ENCODE measurements at regions of chr2 and their contacts with region 1.

Region 1: DNA sequence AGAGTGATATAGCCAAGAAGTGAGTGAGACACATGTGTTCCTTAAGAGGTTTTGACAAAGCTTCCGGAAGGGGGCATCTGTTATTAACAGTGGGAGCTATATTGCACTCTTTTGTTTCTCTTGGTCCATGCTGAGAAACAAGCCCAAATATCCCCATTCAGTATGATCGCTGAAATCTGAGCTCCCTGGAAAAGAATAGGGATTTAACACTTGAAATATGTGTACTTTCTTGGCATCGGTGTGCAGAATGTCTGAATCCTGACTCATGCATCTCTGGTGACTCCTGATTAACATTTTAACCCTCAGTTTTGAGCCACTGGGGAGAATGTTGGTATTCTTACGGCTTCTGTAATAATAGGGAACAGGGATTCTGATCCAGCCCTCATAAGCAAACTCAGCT is 448.1 kb downstream of the TSN start:
- DNase-seq: no peak
- H3K4me3 ChIP-seq: no peak overlapping the region
- H3K27ac ChIP-seq: no peak overlapping the region
- H3K4me1 ChIP-seq: no peaks in the 10 kb centered on the region
- H3K27me3 ChIP-seq: no peaks in the 10 kb centered on the region

Region 2: DNA sequence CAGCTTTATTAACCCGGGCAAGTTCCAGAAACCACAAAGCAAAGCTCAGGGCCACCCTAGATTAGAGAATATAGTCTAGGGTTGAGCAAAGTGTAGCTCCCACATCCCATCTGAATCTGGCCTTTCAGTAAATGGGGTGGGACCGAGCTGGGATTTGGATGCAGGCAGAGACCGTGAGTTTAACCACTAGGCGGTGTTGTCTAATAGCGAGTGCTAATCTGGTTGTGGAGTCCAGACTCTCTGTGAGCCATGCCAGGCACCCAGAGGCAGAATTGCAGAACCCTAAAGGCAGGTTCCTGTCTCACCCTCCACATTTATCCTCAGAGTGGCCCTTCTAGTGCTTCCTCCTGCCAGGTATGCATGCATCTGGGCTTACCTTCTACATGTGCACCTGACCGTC is 12.2 kb before region 1 on chr2:
- CTCF ChIA-PET with region 1: interaction called, 12 read pairs
- POLR2A ChIA-PET with region 1: no interaction called
- DNase-seq: peak; percentile 35 to 65 (median 62)
- H3K4me3 ChIP-seq: no peak overlapping the region
- H3K27ac ChIP-seq: no peak overlapping the region
- H3K4me1 ChIP-seq: peaks cover 5 to 29% (median 24%) of the 10 kb centered on the region in 4 experiments
- H3K27me3 ChIP-seq: no peaks in the 10 kb centered on the region

Region 3: DNA sequence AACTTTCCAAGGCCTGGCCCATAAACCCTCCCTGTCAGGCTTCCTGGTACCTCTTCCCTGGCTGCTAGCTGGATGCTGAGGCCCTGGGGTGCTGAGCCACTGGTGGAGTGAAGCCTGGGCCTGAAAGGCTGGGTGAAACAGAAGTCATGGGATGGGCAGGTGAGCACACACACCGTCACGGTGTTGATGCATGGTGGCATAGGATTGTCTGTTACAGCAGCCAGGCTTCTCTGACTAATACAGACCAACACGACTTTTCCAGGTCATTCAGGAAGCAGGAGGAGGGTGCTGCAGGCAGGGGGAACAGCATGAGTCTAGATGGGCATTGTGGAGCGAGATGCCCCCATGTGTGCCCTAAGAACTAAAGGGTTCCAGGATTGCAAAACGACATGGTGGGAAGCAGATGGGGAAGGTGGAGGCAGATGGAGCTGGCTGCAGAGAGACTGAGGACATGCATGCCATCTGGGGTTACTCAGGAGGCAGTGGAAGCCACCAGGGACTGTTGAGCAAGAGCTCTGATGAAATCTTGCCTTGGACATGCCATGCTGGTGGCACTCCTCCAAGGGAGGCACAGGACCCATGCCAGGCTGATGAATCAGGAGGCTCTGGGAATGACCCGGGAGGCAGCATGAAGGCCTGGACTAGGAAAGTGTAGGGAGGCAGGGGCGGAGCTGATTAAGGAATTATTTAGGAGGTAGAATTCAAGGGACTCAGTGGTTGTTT is 32.8 kb after region 1 on chr2:
- CTCF ChIA-PET with region 1: no interaction called
- POLR2A ChIA-PET with region 1: no interaction called
- DNase-seq: no peak
- H3K4me3 ChIP-seq: no peak overlapping the region
- H3K27ac ChIP-seq: no peak overlapping the region
- H3K4me1 ChIP-seq: no peaks in the 10 kb centered on the region
- H3K27me3 ChIP-seq: no peaks in the 10 kb centered on the region